Left ventricle myocardium inferior (tissue), 1 donor: ENCODE measurements at regions of chr17 and their contacts with region 1.

Region 1: DNA sequence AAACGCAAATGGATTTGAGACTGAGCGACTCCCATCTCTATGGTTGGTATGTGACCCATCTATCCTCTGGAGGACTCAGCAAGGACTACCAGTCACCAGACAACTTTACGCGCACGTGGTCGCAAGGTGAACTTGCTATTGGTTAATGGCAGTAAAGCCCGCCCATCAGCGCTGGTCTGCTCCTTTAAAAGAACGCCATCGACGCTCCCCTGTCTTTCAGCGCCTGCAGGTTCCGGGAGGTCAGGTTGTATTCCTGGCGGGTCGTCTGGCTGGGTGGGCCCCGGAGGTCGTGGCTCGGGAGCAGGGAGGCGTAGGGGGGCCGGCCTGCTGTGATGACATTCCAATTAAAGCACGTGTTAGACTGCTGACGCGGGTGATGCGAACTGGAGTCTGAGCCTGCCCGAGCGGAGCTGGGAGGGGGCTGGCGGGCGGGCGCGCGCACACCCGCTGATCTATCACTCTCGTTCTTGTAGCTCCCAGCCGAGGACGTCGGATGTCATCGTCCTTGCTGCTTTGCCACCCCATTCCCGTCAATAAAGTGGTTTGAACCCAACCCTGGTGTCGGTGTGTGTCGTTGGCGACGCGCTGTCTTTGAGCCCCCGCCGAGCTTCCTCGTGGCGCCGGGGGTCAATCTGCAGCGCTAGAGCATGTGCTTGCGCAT is 15.9 kb upstream of the ERN1 start:
- DNase-seq: peak; percentile 95
- H3K4me3 ChIP-seq: peak overlapping the region; percentile 91
- H3K27ac ChIP-seq: peak overlapping the region; percentile 98
- H3K4me1 ChIP-seq: peaks cover 50% of the 10 kb centered on the region
- H3K27me3 ChIP-seq: no peaks in the 10 kb centered on the region
- CTCF ChIP-seq: peak; percentile 21

Region 2: GRCh38 chr17:63740464-63741181 is 405.3 kb before region 1 on chr17:
- intact Hi-C with region 1: no loop called
- DNase-seq: no peak
- H3K4me3 ChIP-seq: peak overlapping the region; percentile 89
- H3K27ac ChIP-seq: peak overlapping the region; percentile 94
- H3K4me1 ChIP-seq: peaks cover 28% of the 10 kb centered on the region
- H3K27me3 ChIP-seq: no peaks in the 10 kb centered on the region
- CTCF ChIP-seq: no peak

Region 3: DNA sequence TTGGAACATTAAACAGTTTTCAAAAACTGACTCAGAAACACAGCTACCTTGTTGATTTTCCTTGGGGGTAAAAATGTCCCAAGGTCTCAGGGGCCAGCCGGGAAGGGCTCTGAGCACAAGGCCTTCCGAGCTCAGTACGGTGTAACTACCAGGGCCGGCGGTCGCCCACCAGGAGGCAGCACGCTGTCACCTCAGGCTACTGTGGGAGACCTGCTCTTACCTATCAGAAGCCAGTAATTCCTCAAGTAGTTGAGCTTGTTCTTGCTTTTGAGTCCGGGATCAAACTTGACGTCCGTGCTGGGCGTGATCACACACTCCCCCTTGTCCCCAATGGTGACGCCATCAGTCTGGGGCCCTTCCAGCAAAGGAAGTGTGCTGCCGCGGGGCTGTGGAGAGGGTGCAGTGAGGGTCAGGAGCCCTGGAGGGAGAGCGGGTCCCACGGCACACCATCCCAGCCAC is 82.1 kb before region 1 on chr17:
- intact Hi-C with region 1: no loop called
- DNase-seq: peak; percentile 45
- H3K4me3 ChIP-seq: no peak overlapping the region
- H3K27ac ChIP-seq: no peak overlapping the region
- H3K4me1 ChIP-seq: no peaks in the 10 kb centered on the region
- H3K27me3 ChIP-seq: no peaks in the 10 kb centered on the region
- CTCF ChIP-seq: peak; percentile 63

Region 4: DNA sequence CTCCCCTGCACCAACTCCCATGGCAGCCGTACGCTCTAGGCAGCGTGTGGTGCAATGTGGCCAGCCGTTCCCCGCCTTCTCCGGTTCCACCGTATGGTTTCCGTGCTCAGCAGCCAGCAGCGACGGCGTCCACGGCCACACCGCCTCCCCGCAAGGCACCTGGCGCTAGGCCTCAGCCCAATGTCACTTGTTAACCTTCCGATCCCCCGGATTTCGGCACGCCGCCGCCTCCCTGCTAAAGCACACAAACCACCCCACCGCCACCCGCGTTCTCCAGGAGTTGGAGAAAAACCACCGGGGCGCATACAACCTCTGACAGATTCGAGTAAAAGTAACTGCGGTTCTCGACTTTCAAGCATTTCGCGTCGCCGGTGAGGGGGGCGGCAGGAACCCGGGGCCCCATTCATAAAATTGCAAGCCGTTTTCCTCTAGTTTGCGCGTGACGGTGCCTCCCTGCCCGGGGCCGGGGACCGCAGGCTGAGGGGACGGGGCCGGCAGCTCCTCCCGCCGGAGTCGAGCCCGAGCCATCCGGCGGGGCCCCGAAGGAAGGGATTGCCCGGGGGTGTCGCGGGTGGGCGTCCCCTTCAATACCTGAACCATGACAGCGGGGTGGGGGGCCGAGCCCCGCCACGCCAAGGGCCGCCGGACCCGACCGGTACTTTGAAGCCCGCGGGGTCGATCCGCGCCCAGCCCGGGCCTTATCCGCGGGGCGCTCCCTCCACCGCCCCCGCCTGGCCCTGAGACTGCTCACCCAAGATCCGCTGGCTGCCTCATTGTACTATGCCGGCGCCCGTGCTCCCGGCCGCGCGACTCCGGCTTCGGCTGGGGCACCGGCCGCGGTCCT is 116.8 kb after region 1 on chr17 and contains the start of gene TEX2:
- intact Hi-C with region 1: loop called (anchors 5 kb)
- DNase-seq: peak; percentile 60
- H3K4me3 ChIP-seq: peak within 1 kb of the TSS; percentile 95
- H3K27ac ChIP-seq: peak within 1 kb of the TSS; percentile 96
- H3K4me1 ChIP-seq: peaks cover 50% of the 10 kb centered on the region
- H3K27me3 ChIP-seq: no peaks in the 10 kb centered on the region
- CTCF ChIP-seq: no peak
- total RNA-seq, gene TEX2: 58.0 TPM

Region 5: DNA sequence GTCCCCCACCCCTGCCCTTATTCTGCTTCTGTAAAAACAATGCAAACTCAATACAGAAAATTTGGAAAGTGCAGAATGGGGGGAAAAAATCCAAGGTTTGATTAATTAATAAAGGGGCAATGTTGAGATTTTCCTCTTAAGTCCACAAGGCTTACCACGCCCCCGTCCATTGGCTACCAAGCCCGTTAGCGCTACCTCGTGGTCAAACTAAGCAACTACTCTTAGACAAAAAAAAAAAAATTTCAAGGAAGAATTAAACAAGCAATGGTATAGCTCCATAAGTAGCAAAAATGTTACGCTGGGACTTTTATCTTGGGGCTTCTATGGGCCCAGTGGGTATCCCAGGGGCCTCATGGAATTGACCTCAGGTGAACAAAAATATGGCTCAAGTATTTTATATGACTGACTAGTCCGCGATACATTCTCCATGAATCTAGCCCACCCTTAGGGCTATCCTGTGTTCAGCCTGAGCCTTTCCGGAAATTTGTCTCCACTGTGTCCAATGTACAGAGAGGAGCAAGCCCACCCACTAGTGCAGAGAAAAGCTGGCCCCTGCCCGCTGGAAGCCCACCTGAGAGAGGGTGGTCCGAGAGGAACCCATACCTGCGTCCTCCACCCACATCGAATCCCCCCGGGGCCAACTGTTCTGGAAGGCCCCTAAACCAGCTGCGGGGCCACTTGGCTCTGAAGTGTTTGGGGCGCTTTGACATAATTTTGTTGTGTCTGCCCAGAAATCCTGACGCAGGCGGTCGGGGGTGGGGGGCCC is 136.3 kb after region 1 on chr17:
- intact Hi-C with region 1: loop called (anchors 5 kb)
- DNase-seq: peak; percentile 38
- H3K4me3 ChIP-seq: peak overlapping the region; percentile 9
- H3K27ac ChIP-seq: no peak overlapping the region
- H3K4me1 ChIP-seq: peaks cover 30% of the 10 kb centered on the region
- H3K27me3 ChIP-seq: no peaks in the 10 kb centered on the region
- CTCF ChIP-seq: peak; percentile 86